Activated CD4-positive, alpha-beta memory T cell treated with anti-CD3 and anti-CD28 coated beads, Interleukin-2, amount 10 ng/mL, durations not matched to agents 7 days and 5 days (primary cell): ENCODE measurements at regions of chr14 and their contacts with region 1.

Region 1: GRCh38 chr14:77457522-77458290 is at the starts of genes AHSA1 and VIPAS39:
- DNase-seq: peak; percentile 97
- H3K4me3 Mint-ChIP-seq: peak within 1 kb of the TSS; percentile 100
- H3K27ac Mint-ChIP-seq: peak within 1 kb of the TSS; percentile 99
- H3K4me1 Mint-ChIP-seq: peaks cover 33% of the 10 kb centered on the region
- H3K27me3 Mint-ChIP-seq: no peaks in the 10 kb centered on the region
- total RNA-seq, gene AHSA1: 152 to 162 TPM
- total RNA-seq, gene VIPAS39: 20.3 to 20.6 TPM

Region 2: DNA sequence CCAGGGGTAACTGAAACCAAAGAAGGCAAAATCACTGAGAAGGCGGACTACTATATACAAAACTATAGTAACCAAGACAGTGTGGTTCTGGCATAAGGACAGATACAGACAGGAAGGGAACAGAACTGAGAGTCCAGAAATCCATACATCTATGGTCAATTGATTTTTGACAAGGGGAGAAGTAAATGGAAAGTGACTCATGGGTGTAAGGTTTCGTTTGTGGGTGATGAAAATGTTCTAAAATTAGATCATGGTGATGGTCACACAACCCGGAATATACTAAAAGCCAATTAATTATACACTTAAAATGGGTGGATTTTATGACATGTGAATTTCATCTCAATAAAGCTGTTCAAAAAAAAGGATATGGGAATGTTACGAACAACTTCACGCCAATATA is 663.8 kb before region 1 on chr14:
- CTCF ChIA-PET with region 1: no interaction called
- POLR2A ChIA-PET with region 1: no interaction called
- DNase-seq: no peak
- H3K4me3 Mint-ChIP-seq: no peak overlapping the region
- H3K27ac Mint-ChIP-seq: no peak overlapping the region
- H3K4me1 Mint-ChIP-seq: no peaks in the 10 kb centered on the region
- H3K27me3 Mint-ChIP-seq: no peaks in the 10 kb centered on the region

Region 3: DNA sequence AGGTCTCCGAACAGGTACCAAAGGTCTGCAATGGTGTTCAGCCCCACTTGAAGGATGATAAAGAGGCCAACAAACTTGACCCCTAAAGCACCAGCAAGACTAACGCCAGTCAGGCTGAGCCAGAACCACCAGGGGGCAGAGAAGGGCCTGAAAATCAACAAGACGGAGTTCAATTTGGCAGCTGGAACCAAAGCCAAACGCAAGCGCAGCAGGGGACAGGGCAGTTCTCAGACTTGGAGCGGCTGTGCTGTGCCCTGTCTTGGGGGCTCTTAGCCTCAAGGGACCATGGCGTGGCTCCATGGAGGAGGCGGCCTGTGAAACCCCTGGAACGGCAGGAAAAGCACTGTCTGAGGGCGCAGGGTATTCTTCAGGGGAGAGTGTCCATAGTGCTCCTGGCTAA is 156.6 kb before region 1 on chr14:
- CTCF ChIA-PET with region 1: no interaction called
- POLR2A ChIA-PET with region 1: interaction called, 13 read pairs
- DNase-seq: peak; percentile 70
- H3K4me3 Mint-ChIP-seq: no peak overlapping the region
- H3K27ac Mint-ChIP-seq: no peak overlapping the region
- H3K4me1 Mint-ChIP-seq: peaks cover 25% of the 10 kb centered on the region
- H3K27me3 Mint-ChIP-seq: peaks cover 2% of the 10 kb centered on the region

Region 4: DNA sequence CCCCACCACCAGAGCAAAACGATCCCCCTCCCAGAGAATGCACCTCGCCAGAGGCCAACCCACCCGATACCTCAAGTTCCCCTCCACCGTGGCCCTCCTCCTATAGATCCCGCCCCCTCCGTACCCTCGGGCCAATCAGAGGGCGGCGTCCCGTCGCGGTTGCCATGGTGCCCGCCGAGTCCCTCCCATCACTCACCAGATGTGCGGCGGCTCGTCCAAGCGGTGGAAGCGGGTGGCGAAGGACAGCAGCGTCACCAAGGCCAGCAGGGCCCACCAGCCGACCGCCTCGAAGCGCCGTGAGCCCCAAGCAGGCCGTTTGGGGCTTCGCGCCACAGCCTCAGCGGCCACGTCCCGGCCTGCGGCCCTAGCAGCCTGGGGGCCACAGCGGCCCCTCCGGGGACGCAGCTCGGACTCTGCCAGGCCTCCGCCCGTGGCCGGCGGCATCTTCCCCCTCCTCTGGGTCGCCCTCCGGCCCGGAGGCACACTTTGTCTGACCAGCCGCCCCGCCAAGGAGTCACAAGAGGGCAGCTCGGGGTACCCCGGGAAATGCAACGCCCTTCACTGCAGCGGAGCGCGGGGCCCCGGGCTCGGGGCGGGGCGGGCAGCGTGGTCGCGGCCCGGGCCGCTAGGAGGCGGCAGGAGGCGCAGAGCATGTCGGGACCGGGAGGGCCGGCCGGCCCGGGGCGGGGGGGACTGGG is 137.3 kb before region 1 on chr14 and contains the start of gene POMT2:
- CTCF ChIA-PET with region 1: interaction called, 8 read pairs
- POLR2A ChIA-PET with region 1: interaction called, 19 read pairs
- DNase-seq: peak; percentile 93
- H3K4me3 Mint-ChIP-seq: peak within 1 kb of the TSS; percentile 93
- H3K27ac Mint-ChIP-seq: peak within 1 kb of the TSS; percentile 97
- H3K4me1 Mint-ChIP-seq: peaks cover 25% of the 10 kb centered on the region
- H3K27me3 Mint-ChIP-seq: no peaks in the 10 kb centered on the region
- total RNA-seq, gene POMT2: 10.5 to 16.1 TPM

Region 5: GRCh38 chr14:77376771-77377501 is 80.8 kb before region 1 on chr14 and contains the starts of genes SAMD15 and TMED8:
- CTCF ChIA-PET with region 1: interaction called, 12 read pairs
- POLR2A ChIA-PET with region 1: interaction called, 26 read pairs
- DNase-seq: peak; percentile 86
- H3K4me3 Mint-ChIP-seq: peak within 1 kb of the TSS; percentile 87
- H3K27ac Mint-ChIP-seq: peak within 1 kb of the TSS; percentile 77
- H3K4me1 Mint-ChIP-seq: peaks cover 40% of the 10 kb centered on the region
- H3K27me3 Mint-ChIP-seq: no peaks in the 10 kb centered on the region
- total RNA-seq, gene SAMD15: 0.25 TPM in 1 of 2 experiments, not detected in the other
- total RNA-seq, gene TMED8: 21.2 to 22.2 TPM

Region 6: GRCh38 chr14:77498120-77498979 is 40.6 kb after region 1 on chr14 and contains the start of gene ISM2:
- CTCF ChIA-PET with region 1: no interaction called
- POLR2A ChIA-PET with region 1: no interaction called
- DNase-seq: peak; percentile 42
- H3K4me3 Mint-ChIP-seq: peak within 1 kb of the TSS; percentile 56
- H3K27ac Mint-ChIP-seq: no peak within 1 kb of the TSS
- H3K4me1 Mint-ChIP-seq: peaks cover 6% of the 10 kb centered on the region
- H3K27me3 Mint-ChIP-seq: peaks cover 31% of the 10 kb centered on the region
- total RNA-seq, gene ISM2: not detected

Region 7: DNA sequence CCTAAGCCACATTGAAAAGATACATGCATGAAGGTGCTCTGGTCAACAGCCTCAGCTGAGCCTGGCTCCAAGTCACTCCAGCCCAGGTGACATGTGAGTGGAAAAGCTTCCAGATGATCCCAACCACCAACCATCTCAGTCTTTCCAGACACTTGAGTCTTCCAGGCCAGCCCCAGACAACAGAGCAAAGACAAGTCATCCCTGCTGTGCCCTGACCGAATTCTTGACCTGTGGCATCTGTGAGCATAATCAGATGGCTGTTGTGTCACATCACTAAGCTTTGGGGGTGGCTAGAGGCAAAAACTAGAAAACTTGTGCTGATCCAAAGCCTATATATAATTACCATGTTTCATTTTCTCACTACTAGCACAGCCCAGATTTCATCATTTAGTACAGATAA is 91.7 kb after region 1 on chr14:
- CTCF ChIA-PET with region 1: interaction called, 22 read pairs
- POLR2A ChIA-PET with region 1: interaction called, 3 read pairs
- DNase-seq: no peak
- H3K4me3 Mint-ChIP-seq: no peak overlapping the region
- H3K27ac Mint-ChIP-seq: no peak overlapping the region
- H3K4me1 Mint-ChIP-seq: peaks cover 8% of the 10 kb centered on the region
- H3K27me3 Mint-ChIP-seq: no peaks in the 10 kb centered on the region

Region 8: GRCh38 chr14:77707724-77708408 is 250.2 kb after region 1 on chr14 and contains the starts of genes ALKBH1 and SLIRP:
- CTCF ChIA-PET with region 1: interaction called, 8 read pairs
- POLR2A ChIA-PET with region 1: interaction called, 18 read pairs
- DNase-seq: peak; percentile 89
- H3K4me3 Mint-ChIP-seq: peak within 1 kb of the TSS; percentile 96
- H3K27ac Mint-ChIP-seq: peak within 1 kb of the TSS; percentile 85
- H3K4me1 Mint-ChIP-seq: peaks cover 38% of the 10 kb centered on the region
- H3K27me3 Mint-ChIP-seq: no peaks in the 10 kb centered on the region
- total RNA-seq, gene ALKBH1: 12.5 to 12.8 TPM
- total RNA-seq, gene SLIRP: 56.4 to 76.7 TPM